ENCODE measurements at regions of chr14 and their contacts with region 1.

Region 1: GRCh38 chr14:21476925-21477681 is at the starts of genes RAB2B and TOX4:
- DNase-seq: peak; percentile 97
- H3K4me3 Mint-ChIP-seq: peak within 1 kb of the TSS; percentile 99
- H3K27ac Mint-ChIP-seq: peak within 1 kb of the TSS; percentile 99
- H3K4me1 Mint-ChIP-seq: peaks cover 40% of the 10 kb centered on the region
- H3K27me3 Mint-ChIP-seq: no peaks in the 10 kb centered on the region
- total RNA-seq, gene RAB2B: 23.3 to 23.8 TPM
- total RNA-seq, gene TOX4: 78.0 to 83.1 TPM

Region 2: GRCh38 chr14:21437063-21437901 is 39.8 kb before region 1 on chr14:
- CTCF ChIA-PET with region 1: interaction called, 10 read pairs
- POLR2A ChIA-PET with region 1: no interaction called
- DNase-seq: peak; percentile 99
- H3K4me3 Mint-ChIP-seq: peak overlapping the region; percentile 88
- H3K27ac Mint-ChIP-seq: peak overlapping the region; percentile 90
- H3K4me1 Mint-ChIP-seq: peaks cover 60% of the 10 kb centered on the region
- H3K27me3 Mint-ChIP-seq: no peaks in the 10 kb centered on the region

Region 3: GRCh38 chr14:21455911-21456667 is 21.0 kb before region 1 on chr14 and contains the start of gene CHD8:
- CTCF ChIA-PET with region 1: interaction called, 36 read pairs
- POLR2A ChIA-PET with region 1: interaction called, 3 read pairs
- DNase-seq: peak; percentile 100
- H3K4me3 Mint-ChIP-seq: peak within 1 kb of the TSS; percentile 92
- H3K27ac Mint-ChIP-seq: peak within 1 kb of the TSS; percentile 99
- H3K4me1 Mint-ChIP-seq: peaks cover 36% of the 10 kb centered on the region
- H3K27me3 Mint-ChIP-seq: no peaks in the 10 kb centered on the region
- total RNA-seq, gene CHD8: 123 to 127 TPM

Region 4: GRCh38 chr14:21498553-21499526 is 21.7 kb after region 1 on chr14:
- CTCF ChIA-PET with region 1: interaction called, 15 read pairs
- POLR2A ChIA-PET with region 1: no interaction called
- DNase-seq: peak; percentile 58
- H3K4me3 Mint-ChIP-seq: no peak overlapping the region
- H3K27ac Mint-ChIP-seq: peak overlapping the region; percentile 69
- H3K4me1 Mint-ChIP-seq: peaks cover 30% of the 10 kb centered on the region
- H3K27me3 Mint-ChIP-seq: no peaks in the 10 kb centered on the region

Region 5: DNA sequence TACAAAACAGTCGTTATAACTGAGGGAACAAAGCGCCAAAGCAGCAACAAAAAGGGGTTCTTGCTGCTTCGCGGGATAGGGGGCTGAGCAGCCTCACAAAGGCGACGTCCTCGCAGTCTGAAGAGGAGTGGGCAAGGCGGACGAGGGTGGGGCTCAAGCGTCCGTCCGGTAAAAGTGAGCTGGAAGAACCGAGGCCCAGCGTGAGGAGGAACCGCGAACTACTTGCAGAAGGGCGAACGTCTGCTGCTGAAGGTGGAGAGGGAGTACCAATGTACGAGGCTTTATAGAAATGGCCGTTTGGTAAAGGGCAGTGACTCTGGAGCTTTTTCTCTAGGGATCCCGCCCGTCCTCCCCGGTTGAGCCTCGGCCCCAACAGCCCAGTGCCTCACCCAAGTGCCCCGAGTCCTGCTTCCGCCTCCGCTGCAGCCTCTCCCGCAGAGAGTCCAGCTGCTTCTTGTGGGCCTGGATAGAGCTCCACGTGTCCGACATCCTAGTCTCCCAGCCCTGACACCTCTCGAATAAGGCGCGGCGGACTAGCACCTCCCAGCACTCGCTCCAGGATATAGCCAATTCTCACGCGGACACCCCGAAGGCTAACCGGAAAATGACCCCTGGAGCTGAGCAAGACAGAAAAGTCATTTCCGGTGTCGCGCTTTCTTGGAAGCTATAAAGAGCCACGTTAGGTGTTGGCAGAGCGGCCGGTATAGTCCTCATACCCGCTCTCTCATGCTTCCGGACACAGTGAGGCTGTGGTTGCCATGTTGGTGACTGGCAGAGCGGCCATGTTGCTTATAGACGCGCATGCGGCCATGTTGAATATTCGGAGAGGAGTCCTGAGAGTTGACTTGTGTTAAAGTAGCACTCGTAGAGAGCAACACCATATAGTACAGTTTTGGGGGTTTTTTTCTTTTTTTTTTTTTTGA is 33.9 kb after region 1 on chr14 and contains the start of gene METTL3:
- CTCF ChIA-PET with region 1: interaction called, 12 read pairs
- POLR2A ChIA-PET with region 1: no interaction called
- DNase-seq: peak; percentile 97
- H3K4me3 Mint-ChIP-seq: peak within 1 kb of the TSS; percentile 99
- H3K27ac Mint-ChIP-seq: peak within 1 kb of the TSS; percentile 100
- H3K4me1 Mint-ChIP-seq: peaks cover 38% of the 10 kb centered on the region
- H3K27me3 Mint-ChIP-seq: peaks cover 3% of the 10 kb centered on the region
- total RNA-seq, gene METTL3: 80.2 to 81.4 TPM

Region 6: GRCh38 chr14:22002860-22003309 is 525.8 kb after region 1 on chr14:
- CTCF ChIA-PET with region 1: no interaction called
- POLR2A ChIA-PET with region 1: no interaction called
- DNase-seq: peak; percentile 78
- H3K4me3 Mint-ChIP-seq: peak overlapping the region; percentile 77
- H3K27ac Mint-ChIP-seq: peak overlapping the region; percentile 90
- H3K4me1 Mint-ChIP-seq: peaks cover 34% of the 10 kb centered on the region
- H3K27me3 Mint-ChIP-seq: no peaks in the 10 kb centered on the region